HEK293 (cell line): ENCODE measurements at regions of chr5 and their contacts with region 1.

Region 1: GRCh38 chr5:60944904-60945812 is at the starts of genes ERCC8 and NDUFAF2:
- H3K4me3 ChIP-seq: peak within 1 kb of the TSS; percentile 67
- H3K27ac ChIP-seq: peak within 1 kb of the TSS; percentile 51; the same call in 1 of the 2 replicates
- H3K4me1 ChIP-seq: no peaks in the 10 kb centered on the region
- CTCF ChIP-seq: 0 out of 2 replicates have a peak, but pooled peaks have one; percentile 33

Region 2: GRCh38 chr5:60843936-60844905 is 100.9 kb before region 1 on chr5 and contains the start of gene ELOVL7:
- CTCF ChIA-PET with region 1: no interaction called
- POLR2A ChIA-PET with region 1: interaction called, 10 read pairs
- H3K4me3 ChIP-seq: peak within 1 kb of the TSS; percentile 89
- H3K27ac ChIP-seq: peak within 1 kb of the TSS; percentile 61; the same call in 1 of the 2 replicates
- H3K4me1 ChIP-seq: no peaks in the 10 kb centered on the region; the same call in 1 of the 2 replicates
- CTCF ChIP-seq: peak; percentile 73

Region 3: DNA sequence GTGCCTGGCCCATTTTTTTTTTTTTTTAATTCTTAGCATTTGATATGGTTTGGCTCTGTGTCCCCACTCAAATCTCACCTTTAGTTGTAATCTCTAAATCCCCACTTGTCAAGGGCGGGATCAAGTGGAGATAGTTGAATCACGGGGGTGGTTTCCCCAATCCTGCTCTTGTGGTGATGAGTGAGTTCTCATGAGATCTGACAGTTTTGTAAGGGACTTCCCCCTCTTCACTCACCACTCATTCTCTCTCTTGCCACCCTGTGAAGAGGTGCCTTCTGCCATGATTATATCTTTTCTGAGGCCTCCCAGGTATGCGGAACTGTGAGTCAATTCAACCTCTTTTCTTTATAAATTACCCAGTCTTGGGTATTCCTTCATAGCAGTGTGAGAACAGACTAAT is 27.1 kb after region 1 on chr5:
- CTCF ChIA-PET with region 1: no interaction called
- POLR2A ChIA-PET with region 1: no interaction called
- H3K4me3 ChIP-seq: no peak overlapping the region
- H3K27ac ChIP-seq: no peak overlapping the region
- H3K4me1 ChIP-seq: no peaks in the 10 kb centered on the region
- CTCF ChIP-seq: no peak